Activated B cell treated with CpG ODN at 0.5 μM for 24 hours (primary cell): ENCODE measurements at regions of chr1 and their contacts with region 1.

Region 1: DNA sequence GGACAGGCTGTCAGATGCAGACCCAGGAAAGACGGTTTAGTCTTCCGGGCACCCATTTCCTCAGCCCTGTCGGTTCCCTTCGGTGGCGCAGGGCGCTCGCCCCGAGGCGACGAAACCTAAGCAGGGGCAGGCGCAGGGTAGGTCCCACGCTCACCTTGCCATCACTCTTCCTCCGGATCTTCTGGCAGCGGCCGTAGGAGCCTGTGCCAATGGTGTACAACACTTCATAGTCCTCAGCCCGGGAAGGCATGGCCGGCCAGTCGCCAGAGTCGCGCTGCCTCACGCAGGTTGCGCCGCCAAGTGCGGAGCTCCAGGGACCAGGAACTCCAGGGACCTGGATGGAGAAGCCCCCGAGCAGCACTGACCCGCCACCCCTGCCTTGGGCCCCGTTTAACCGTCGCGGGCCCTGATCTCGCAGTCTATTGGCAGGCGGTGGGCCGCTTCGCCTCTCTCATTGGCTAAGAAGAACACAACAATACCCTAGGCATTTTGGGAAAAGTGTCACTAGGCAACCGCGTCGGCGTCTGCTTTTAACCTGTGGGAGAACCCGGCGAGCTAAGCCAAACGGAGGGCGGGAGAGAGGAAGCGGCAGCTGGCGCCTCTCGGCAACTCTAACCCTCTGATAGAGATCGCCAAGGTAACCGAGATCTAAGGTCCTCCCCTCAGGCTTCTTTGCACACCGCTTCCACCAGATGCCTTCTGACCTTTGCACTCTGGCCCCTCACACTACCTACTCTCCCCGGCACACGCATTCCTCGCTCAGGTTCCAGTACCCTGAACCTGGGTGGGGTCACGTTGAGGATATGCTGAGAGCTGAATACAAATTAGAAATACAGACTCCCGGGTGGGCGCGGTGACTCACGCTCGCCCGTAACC is at the start of gene NEK2:
- DNase-seq: peak; percentile 64
- ATAC-seq: peak; percentile 93
- H3K4me3 Mint-ChIP-seq: peak within 1 kb of the TSS; percentile 88
- H3K27ac Mint-ChIP-seq: peak within 1 kb of the TSS; percentile 69
- H3K4me1 Mint-ChIP-seq: peaks cover 39% of the 10 kb centered on the region
- H3K27me3 Mint-ChIP-seq: no peaks in the 10 kb centered on the region
- CTCF ChIP-seq: no peak
- total RNA-seq, gene NEK2: 0.35 and 0.59 TPM in 2 replicates

Region 2: DNA sequence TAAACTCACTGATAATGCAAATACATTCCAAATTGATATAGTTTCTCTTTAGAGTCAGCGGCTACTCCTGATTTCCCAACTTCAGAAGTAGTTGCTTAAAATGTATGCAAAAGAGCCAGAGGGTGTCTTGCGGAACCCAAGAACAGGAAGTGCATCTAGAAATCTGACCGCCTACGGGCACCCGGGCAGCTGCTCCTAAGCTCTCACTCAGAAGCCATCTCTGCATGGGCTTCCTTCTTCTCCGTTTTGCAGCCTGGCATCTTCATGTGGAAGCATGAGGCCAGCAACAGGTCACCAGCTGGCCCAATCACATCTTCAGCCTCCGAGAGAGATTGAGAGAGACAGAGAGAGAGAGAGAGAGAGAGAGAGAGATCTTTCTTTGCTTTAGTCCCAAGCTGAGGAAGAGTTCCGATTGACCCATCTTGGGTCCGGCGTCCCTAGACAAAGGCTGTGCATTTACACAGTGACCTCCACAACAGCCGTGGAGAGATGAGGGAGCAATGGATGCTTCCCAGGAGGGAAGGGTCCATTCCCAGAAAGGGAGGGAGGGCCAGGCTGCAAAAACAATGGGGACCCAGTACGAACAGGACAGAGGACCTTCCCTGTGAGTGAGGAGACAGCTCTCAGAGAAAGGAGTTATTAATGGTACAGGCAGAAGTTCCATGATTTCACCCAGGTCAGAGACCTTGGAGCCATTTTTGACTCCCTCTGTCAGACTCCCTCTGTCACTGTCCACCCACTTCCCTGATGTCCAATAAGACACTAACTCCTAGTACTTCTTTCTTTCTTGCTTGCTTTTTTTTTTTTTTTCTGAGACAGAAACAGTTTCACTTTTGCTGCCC is 68.3 kb before region 1 on chr1:
- CTCF ChIA-PET with region 1: no interaction called
- POLR2A ChIA-PET with region 1: interaction called, 7 read pairs
- intact Hi-C with region 1: loop called (anchors 2 kb)
- DNase-seq: no peak
- ATAC-seq: peak; percentile 92
- H3K4me3 Mint-ChIP-seq: peak overlapping the region; percentile 88
- H3K27ac Mint-ChIP-seq: peak overlapping the region; percentile 91
- H3K4me1 Mint-ChIP-seq: peaks cover 29% of the 10 kb centered on the region
- H3K27me3 Mint-ChIP-seq: no peaks in the 10 kb centered on the region
- CTCF ChIP-seq: no peak

Region 3: DNA sequence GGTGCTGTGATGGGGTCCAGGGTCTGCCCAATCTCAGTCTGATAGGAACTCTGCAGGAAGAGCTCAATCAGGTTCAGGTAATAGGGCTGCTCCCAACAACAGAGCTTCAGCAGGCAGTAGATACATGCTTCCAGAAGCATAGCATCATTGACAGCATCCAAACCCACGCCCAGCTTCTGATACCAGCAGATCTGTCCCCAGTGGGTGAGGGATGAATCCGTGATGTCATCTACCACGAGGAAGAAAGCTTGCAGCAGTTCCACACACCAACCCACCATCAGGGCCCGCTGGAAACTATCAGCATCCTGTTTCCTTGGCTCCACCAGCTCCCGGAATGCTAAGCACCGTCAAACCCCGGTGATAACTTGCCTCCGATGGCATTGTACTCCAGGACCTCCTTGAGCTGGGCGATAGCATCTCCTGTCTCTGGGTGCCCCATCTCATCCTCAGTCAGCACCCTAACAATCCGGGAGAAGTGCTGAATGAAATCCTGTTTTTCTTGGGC is 14.7 kb before region 1 on chr1:
- CTCF ChIA-PET with region 1: no interaction called
- POLR2A ChIA-PET with region 1: no interaction called
- intact Hi-C with region 1: no loop called
- DNase-seq: no peak
- ATAC-seq: no peak
- H3K4me3 Mint-ChIP-seq: no peak overlapping the region
- H3K27ac Mint-ChIP-seq: no peak overlapping the region
- H3K4me1 Mint-ChIP-seq: no peaks in the 10 kb centered on the region
- H3K27me3 Mint-ChIP-seq: no peaks in the 10 kb centered on the region
- CTCF ChIP-seq: no peak

Region 4: GRCh38 chr1:211698161-211699026 is 22.9 kb after region 1 on chr1:
- CTCF ChIA-PET with region 1: interaction called, 29 read pairs
- POLR2A ChIA-PET with region 1: interaction called, 16 read pairs
- intact Hi-C with region 1: loop called (anchors 1 kb)
- DNase-seq: peak; percentile 59
- ATAC-seq: peak; percentile 40
- H3K4me3 Mint-ChIP-seq: peak overlapping the region; percentile 68
- H3K27ac Mint-ChIP-seq: no peak overlapping the region
- H3K4me1 Mint-ChIP-seq: peaks cover 57% of the 10 kb centered on the region
- H3K27me3 Mint-ChIP-seq: peaks cover 3% of the 10 kb centered on the region
- CTCF ChIP-seq: peak; percentile 22